Activated CD8-positive, alpha-beta T cell treated with anti-CD3 and anti-CD28 coated beads, Interleukin-2, amount 10 ng/mL, durations not matched to agents 7 days and 5 days (primary cell): ENCODE measurements at regions of chr2 and their contacts with region 1.

Region 1: DNA sequence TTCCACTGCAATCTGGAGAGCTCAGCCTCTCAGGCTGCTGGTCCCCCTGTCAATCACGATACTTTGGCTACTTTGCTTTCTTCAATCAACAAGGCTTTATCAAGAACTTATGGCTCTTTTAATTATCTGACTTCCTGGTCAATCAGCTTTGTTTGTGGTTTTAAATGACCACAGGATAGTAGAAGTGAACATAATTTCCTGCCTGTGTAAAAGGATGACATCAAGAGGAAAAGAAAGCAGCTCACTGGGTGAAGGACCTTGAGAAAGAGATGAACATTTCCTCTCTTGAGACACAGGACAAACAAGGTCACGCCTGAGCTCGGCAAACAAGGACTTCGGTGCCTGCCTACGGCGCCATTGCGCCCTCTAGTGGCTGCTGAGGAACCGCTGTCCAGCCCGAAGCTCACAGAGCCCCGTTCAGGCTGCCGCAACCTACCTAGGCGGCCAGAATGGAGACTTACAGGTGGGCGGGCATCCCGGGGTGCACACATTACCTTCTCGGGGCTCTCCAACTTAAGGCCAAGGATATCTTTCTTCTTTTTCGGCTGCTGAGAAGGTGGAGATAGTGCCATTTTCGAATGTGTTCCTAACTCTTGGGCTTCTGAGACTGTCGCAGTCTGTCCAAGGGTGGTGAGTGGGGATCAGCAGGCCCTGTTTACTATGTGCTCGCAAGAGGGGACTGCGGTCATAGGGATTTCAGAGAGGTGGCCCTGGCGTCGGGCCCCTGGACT is 54.0 kb downstream of the IL1RL2 start:
- DNase-seq: peak; percentile 92
- ATAC-seq: peak; percentile 97
- H3K4me3 Mint-ChIP-seq: peak overlapping the region; percentile 16
- H3K27ac Mint-ChIP-seq: peak overlapping the region; percentile 71
- H3K4me1 Mint-ChIP-seq: peaks cover 38% of the 10 kb centered on the region
- H3K27me3 Mint-ChIP-seq: no peaks in the 10 kb centered on the region

Region 2: DNA sequence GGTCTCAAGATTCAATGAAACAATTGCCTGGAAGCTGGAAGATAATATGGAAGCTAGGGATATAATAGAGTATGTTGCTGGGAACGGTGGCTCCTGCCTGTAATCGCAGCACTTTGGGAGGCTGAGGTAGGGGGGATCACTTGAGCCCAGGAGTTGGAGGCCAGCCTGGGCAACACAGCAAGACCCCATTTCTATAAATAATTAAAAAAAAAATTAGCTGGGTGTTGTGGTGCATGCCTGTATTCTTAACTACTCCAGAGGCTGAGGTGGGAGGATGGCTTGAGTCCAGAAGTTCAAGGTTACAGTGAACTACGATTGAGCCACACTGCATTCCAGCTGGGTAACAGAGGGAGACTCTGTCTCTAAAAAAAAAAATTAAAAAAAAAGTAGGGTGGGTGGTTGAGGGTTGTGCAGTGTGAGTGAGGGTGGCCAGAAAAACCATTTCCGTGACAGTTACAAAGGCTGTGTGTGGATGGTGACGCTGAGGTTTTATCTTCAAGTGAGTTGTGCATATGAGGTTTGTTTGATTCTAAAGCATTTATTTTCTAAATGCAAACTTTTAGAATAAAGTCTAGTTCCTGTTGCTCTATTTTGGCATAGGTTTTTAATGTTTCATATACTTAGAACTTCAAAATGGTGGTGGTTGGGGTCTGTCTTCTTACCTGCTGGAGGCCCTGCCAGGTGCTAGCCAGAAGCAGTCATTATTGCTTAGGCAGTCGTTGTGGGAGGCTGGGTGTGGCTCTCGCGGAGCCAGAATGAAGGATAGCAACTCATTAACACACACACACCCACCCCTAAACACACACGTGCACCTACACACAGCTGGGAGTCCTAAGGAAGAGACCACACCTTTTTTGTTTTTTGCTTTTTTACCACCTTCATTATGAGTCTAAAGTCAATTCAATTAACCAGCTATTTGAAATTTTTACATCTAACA is 253.7 kb before region 1 on chr2:
- CTCF ChIA-PET with region 1: interaction called, 10 read pairs
- POLR2A ChIA-PET with region 1: no interaction called
- DNase-seq: peak; percentile 61
- ATAC-seq: peak; percentile 86
- H3K4me3 Mint-ChIP-seq: peak overlapping the region; percentile 56
- H3K27ac Mint-ChIP-seq: peak overlapping the region; percentile 91
- H3K4me1 Mint-ChIP-seq: peaks cover 45% of the 10 kb centered on the region
- H3K27me3 Mint-ChIP-seq: peaks cover 29% of the 10 kb centered on the region

Region 3: DNA sequence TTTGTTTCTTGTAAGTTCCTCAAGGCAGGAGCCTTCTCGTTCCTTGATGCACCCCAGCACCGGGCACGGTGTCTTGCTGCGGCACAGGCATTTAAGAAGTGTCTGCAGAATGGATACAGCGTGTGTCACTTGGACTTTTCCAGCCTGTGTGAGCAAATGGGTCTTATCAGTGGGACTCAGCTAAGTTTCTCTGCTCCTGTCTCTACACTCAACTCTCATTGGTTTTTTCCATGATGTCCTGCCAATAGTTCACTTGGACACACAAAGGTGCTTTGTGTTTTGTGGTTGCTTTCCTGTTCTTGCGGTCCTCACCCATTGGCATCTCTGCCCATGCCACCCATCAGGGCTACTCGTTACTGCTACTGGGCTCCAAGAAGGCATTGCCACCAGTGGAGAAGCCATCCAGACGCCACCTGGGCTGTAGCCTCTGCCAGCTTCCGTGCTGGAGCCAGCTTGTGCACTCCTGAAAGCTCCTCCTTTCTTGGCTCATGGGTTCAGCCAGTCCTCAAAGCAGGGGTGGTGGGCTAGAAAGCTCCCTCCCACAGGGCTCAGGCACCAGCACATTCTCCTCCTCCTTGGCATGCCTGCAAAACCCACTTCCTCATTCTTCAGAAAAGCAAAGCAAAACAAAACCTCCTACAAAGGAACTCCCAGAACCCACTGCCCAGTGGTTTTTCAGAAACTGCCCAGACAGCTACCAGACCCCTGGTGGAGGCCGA is 207.6 kb before region 1 on chr2:
- CTCF ChIA-PET with region 1: interaction called, 13 read pairs
- POLR2A ChIA-PET with region 1: no interaction called
- DNase-seq: peak; percentile 30
- ATAC-seq: peak; percentile 63
- H3K4me3 Mint-ChIP-seq: peak overlapping the region; percentile 32
- H3K27ac Mint-ChIP-seq: peak overlapping the region; percentile 77
- H3K4me1 Mint-ChIP-seq: peaks cover 36% of the 10 kb centered on the region
- H3K27me3 Mint-ChIP-seq: peaks cover 2% of the 10 kb centered on the region

Region 4: DNA sequence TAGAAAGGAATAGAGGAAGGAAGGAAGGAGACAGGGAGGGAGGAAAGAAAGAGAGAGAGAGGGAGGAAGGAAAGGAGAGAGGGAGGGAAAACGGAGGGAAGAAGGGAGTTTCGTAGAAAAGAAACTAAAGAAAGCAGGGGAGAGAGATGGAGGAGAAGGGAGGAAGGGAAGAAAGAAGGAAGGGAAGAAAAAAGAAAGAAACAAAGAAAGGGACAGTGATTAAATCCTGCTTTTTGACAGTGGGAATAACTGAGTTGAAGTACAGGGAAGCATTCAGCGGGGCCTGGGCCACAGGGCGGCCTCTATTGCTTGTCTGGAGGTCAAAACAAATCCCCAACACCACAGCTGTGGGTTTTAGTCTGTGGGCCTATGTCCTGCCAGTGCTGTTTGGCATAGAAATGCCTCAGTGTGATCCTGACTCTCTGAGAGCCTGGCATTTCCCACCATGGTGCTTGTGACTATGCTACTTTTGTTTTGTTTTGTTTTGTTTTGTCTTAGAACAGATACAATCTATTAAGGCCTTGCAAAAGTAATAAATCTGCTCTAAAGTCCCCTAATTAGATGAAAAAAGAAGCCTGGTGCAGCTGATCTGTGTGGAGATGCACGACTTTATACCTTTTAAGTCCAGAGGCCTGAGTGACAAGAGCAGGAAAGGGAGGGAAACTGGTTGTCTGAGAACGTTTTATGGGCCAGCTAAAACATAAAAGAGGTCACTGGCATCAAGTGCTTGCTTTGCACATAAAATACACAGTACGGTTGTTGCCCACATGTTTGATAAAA is 14.0 kb before region 1 on chr2:
- CTCF ChIA-PET with region 1: interaction called, 30 read pairs
- POLR2A ChIA-PET with region 1: no interaction called
- DNase-seq: no peak
- ATAC-seq: no peak
- H3K4me3 Mint-ChIP-seq: no peak overlapping the region
- H3K27ac Mint-ChIP-seq: peak overlapping the region; percentile 84
- H3K4me1 Mint-ChIP-seq: peaks cover 68% of the 10 kb centered on the region
- H3K27me3 Mint-ChIP-seq: no peaks in the 10 kb centered on the region

Region 5: DNA sequence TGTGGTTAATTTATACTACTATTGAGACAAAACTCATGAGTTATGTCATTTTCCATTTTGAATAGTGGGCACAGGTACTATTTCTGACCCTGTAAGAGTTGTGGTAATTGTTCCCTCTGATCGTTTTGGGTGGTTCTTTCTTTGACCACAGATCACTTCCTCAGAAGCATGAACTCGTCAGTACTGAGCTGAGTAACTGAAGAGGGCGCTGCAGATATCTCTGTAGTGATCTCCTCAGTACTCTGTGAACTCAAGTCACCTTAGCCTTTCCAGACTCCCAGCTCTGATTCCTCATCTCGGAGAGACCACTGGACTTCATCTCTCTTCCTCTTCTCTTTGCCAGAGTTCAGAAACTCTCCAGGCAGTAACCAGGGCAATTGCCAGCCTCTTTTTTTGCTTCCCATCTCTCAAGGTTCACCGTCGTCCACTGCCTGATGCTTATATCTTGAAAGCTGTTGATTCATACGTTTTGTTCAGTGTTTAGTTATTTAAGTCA is 61.1 kb after region 1 on chr2:
- CTCF ChIA-PET with region 1: interaction called, 14 read pairs
- POLR2A ChIA-PET with region 1: no interaction called
- DNase-seq: peak; percentile 82
- ATAC-seq: peak; percentile 98
- H3K4me3 Mint-ChIP-seq: peak overlapping the region; percentile 32
- H3K27ac Mint-ChIP-seq: peak overlapping the region; percentile 65
- H3K4me1 Mint-ChIP-seq: peaks cover 36% of the 10 kb centered on the region
- H3K27me3 Mint-ChIP-seq: no peaks in the 10 kb centered on the region

Region 6: GRCh38 chr2:102442967-102443828 is 202.4 kb after region 1 on chr2:
- CTCF ChIA-PET with region 1: interaction called, 67 read pairs
- POLR2A ChIA-PET with region 1: interaction called, 4 read pairs
- DNase-seq: peak; percentile 72
- ATAC-seq: peak; percentile 83
- H3K4me3 Mint-ChIP-seq: peak overlapping the region; percentile 41
- H3K27ac Mint-ChIP-seq: peak overlapping the region; percentile 65
- H3K4me1 Mint-ChIP-seq: peaks cover 12% of the 10 kb centered on the region
- H3K27me3 Mint-ChIP-seq: no peaks in the 10 kb centered on the region

Region 7: DNA sequence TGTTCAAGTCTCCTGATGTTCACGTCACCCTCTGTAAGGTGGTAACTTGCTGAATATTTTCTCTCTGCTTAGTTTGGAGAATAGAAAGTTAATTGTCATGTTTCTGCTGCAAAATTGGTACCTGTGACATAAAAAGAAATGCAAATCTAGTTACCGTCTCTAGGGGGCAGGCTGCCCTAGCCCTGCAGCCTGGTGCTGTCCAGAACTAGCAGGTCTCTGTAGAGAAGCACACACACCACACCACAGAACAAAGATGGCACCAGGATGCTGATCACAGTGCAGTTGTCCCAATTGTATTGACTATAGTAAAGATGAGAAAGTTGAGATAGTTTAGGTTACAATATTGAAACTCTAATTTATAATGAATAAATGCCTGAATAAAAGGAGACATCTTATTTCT is 279.2 kb after region 1 on chr2:
- CTCF ChIA-PET with region 1: no interaction called
- POLR2A ChIA-PET with region 1: no interaction called
- DNase-seq: peak; percentile 31
- ATAC-seq: no peak
- H3K4me3 Mint-ChIP-seq: no peak overlapping the region
- H3K27ac Mint-ChIP-seq: no peak overlapping the region
- H3K4me1 Mint-ChIP-seq: no peaks in the 10 kb centered on the region
- H3K27me3 Mint-ChIP-seq: peaks cover 5% of the 10 kb centered on the region

Region 8: DNA sequence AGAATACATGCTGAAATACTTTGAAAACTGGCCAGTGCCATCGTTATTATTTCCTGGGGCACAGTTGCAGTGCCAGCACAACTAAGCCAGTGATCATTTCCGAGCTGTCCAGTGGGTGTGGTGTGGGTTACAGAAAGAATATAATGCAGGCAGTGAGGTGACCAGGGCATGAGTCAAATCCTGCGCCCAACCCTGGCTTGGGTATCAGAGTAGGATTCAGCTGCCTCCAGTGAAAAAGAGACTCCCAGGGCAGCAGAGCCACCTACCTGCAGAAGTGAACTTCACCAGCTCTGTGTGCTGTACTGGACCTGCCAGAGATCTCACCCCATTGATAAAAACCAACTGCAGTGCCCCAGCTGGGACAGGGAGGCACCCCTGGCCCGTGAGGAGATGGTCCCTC is 396.6 kb after region 1 on chr2:
- CTCF ChIA-PET with region 1: no interaction called
- POLR2A ChIA-PET with region 1: no interaction called
- DNase-seq: no peak
- ATAC-seq: no peak
- H3K4me3 Mint-ChIP-seq: no peak overlapping the region
- H3K27ac Mint-ChIP-seq: no peak overlapping the region
- H3K4me1 Mint-ChIP-seq: no peaks in the 10 kb centered on the region
- H3K27me3 Mint-ChIP-seq: peaks cover 14% of the 10 kb centered on the region